Lower leg skin (tissue), 4 donors: ENCODE measurements at regions of chr7 and their contacts with region 1.

Region 1: GRCh38 chr7:18345641-18346234 is 149.8 kb upstream of the HDAC9 start:
- DNase-seq: no peak
- H3K4me3 ChIP-seq: no peak overlapping the region
- CTCF ChIP-seq: peak in 1 of 3 donors; percentile 22
- POLR2A ChIP-seq: no peak

Region 2: DNA sequence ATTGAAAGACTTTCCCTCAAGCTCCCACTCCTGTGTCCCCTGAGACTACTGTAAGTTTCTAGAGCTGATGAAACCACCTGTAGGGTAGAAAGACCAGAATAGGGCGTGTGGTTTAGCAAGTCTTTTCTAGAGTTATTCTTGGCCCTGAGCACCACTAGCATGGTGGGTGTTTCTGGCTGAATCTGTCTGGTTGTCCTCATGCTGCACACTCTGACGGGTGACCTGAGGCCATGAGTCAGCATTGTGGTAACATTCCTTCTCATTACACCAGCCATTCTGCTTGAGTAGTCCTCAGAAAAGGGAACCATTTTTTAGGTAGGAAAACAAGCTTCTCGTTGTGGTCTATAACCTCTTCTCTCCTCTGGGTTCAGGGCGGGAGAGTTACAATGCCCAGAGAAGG is 655.7 kb before region 1 on chr7:
- intact Hi-C with region 1: loop called (anchors 10 kb)
- DNase-seq: no peak
- H3K4me3 ChIP-seq: no peak overlapping the region
- CTCF ChIP-seq: no peak
- POLR2A ChIP-seq: no peak

Region 3: GRCh38 chr7:17769918-17770317 is 575.8 kb before region 1 on chr7:
- intact Hi-C with region 1: loop called (anchors 10 kb)
- DNase-seq: peak; percentile 55 to 87
- H3K4me3 ChIP-seq: no peak overlapping the region
- CTCF ChIP-seq: no peak
- POLR2A ChIP-seq: no peak

Region 4: DNA sequence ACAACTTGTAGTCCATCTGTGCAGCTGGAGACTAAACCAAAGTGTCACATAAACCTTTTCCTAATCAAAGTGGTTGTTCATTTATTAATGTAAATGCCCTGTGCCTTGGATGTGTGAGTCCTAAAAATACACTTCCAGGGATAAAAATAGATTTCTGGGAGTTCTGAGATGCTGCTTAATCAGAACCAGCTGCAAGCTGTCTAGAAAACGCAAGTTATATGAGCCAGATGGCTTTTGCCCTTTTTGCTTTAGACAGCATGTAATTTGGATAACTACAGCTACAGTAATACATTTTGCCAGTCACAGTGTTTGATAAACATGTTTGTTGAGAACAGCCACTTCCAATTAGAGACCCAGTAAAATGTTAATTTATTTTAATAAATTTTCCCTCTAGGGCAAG is 133.0 kb before region 1 on chr7:
- intact Hi-C with region 1: no loop called
- DNase-seq: no peak
- H3K4me3 ChIP-seq: no peak overlapping the region
- CTCF ChIP-seq: no peak
- POLR2A ChIP-seq: no peak